A549 (cell line): ENCODE measurements at regions of chr20 and their contacts with region 1.

Region 1: DNA sequence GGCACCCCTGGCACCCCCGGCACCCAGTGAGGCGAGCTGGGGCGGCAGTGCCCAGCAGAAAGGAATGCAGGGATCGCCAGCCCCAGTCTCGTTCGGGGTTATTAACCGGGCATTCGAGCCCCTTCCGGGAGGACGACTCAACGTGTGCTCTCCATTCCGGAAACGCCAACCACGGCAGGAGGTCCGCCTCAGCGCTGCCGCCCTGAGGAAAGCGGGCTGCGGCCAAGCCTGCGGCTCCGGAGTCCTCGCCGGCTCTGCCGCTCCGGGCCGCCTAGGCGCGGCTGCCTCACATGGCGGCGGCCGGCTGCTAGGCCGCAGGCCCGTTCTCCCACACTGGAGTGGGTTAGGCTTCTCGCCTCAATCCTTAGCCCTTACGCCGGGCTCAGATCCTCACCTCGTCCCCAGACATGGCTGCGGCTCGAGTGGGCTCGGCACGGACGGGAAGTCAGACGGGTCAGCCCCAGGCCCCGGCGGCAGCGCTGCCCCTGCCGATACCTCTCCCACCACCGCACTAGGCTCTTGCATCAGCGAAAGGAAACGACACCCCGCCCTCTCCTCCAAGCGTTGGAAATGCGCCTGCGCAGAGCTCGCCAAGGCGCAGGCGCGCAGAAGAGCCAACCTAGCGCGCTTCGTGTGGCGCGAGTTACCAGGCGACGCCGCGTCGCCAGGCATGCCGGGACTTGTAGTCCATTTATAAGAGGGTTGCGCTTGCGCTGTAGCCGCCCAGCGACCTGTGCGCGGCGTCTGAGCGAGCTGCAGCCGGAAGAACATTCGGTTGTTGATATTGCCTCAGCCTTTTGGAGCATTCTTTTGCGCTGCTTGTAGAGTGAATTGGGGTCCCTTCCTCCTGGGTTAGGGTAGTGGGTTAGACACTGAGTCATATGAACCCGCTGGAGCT is at the start of gene EIF2S2:
- DNase-seq: peak; percentile 92 to 99
- ATAC-seq: peak; percentile 96 to 97
- H3K4me3 ChIP-seq: peak within 1 kb of the TSS; percentile 80
- H3K27ac ChIP-seq: peak within 1 kb of the TSS; percentile 93 to 97
- H3K4me1 ChIP-seq: peaks cover 35% of the 10 kb centered on the region; the same call in 2 of the 3 replicates
- CTCF ChIP-seq: no peak
- EP300 ChIP-seq: no peak
- POLR2A ChIP-seq: peak; percentile 57
- RAD21 ChIP-seq: no peak
- polyA plus RNA-seq, gene EIF2S2: 166 and 227 TPM in 2 replicates

Region 2: GRCh38 chr20:33992923-33993575 is 118.9 kb before region 1 on chr20:
- CTCF ChIA-PET with region 1: no interaction called
- POLR2A ChIA-PET with region 1: interaction called, 15 read pairs
- DNase-seq: peak; percentile 95 to 99
- ATAC-seq: peak; percentile 75 to 88
- H3K4me3 ChIP-seq: peak overlapping the region; percentile 71
- H3K27ac ChIP-seq: peak overlapping the region; percentile 92 to 94
- H3K4me1 ChIP-seq: peaks cover 21% of the 10 kb centered on the region
- CTCF ChIP-seq: no peak
- EP300 ChIP-seq: no peak
- POLR2A ChIP-seq: peak; percentile 96
- RAD21 ChIP-seq: no peak

Region 3: GRCh38 chr20:34100578-34100977 is 11.4 kb before region 1 on chr20:
- CTCF ChIA-PET with region 1: interaction called, 3 read pairs
- POLR2A ChIA-PET with region 1: interaction called, 14 read pairs
- DNase-seq: no peak
- ATAC-seq: no peak
- H3K4me3 ChIP-seq: no peak overlapping the region
- H3K27ac ChIP-seq: no peak overlapping the region
- H3K4me1 ChIP-seq: peaks cover 4% of the 10 kb centered on the region; the same call in 1 of the 3 replicates
- CTCF ChIP-seq: no peak
- EP300 ChIP-seq: no peak
- POLR2A ChIP-seq: no peak
- RAD21 ChIP-seq: no peak

Region 4: GRCh38 chr20:34129518-34130162 is 17.7 kb after region 1 on chr20:
- CTCF ChIA-PET with region 1: interaction called, 35 read pairs
- POLR2A ChIA-PET with region 1: interaction called, 7 read pairs
- DNase-seq: peak; percentile 60 to 77
- ATAC-seq: peak; percentile 98
- H3K4me3 ChIP-seq: peak overlapping the region; percentile 14; the same call in 2 of the 3 replicates
- H3K27ac ChIP-seq: no peak overlapping the region
- H3K4me1 ChIP-seq: peaks cover 3% of the 10 kb centered on the region; the same call in 2 of the 3 replicates
- CTCF ChIP-seq: peak; percentile 92
- EP300 ChIP-seq: no peak
- POLR2A ChIP-seq: no peak
- RAD21 ChIP-seq: peak; percentile 92 to 93